ENCODE measurements at regions of chr1 and their contacts with region 1.

Region 1: GRCh38 chr1:12153181-12153785 is 13.5 kb upstream of the TNFRSF1B start:
- DNase-seq: no peak
- ATAC-seq: no peak
- H3K4me3 Mint-ChIP-seq: peak overlapping the region; percentile 18
- H3K27ac Mint-ChIP-seq: peak overlapping the region; percentile 99
- H3K4me1 Mint-ChIP-seq: peaks cover 84% of the 10 kb centered on the region
- H3K27me3 Mint-ChIP-seq: no peaks in the 10 kb centered on the region

Region 2: DNA sequence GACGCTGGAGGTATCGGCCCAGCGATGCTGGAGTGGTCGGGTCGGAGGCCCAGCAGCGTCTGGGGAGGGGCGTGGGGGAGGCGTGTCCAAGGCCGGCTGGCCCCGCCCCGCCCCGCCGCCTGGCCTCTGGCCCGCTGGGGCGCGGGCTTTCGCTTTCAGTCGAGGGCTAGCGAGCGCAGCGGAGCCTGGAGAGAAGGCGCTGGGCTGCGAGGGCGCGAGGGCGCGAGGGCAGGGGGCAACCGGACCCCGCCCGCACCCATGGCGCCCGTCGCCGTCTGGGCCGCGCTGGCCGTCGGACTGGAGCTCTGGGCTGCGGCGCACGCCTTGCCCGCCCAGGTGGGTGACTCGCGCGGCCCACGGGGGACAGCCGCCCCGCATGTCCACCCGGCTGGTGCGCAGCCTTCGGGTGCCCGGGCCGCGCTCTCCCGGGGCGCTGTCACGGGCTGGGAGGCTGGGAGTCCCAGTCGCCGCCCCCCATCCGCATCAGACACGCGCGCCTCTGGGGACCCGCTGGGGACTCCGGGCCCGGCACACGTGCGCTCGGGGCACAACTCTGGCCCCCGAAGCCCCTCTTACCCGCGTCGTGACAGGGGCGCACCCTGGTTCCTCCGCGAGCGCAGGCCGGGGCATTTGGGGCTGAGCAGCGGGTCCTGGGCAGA is 13.7 kb after region 1 on chr1 and contains the start of gene TNFRSF1B:
- POLR2A ChIA-PET with region 1: interaction called, 108 read pairs
- DNase-seq: peak; percentile 87
- ATAC-seq: peak; percentile 53
- H3K4me3 Mint-ChIP-seq: peak within 1 kb of the TSS; percentile 100
- H3K27ac Mint-ChIP-seq: peak within 1 kb of the TSS; percentile 99
- H3K4me1 Mint-ChIP-seq: peaks cover 62% of the 10 kb centered on the region
- H3K27me3 Mint-ChIP-seq: no peaks in the 10 kb centered on the region
- total RNA-seq, gene TNFRSF1B: 215 to 246 TPM

Region 3: GRCh38 chr1:12244078-12244477 is 90.8 kb after region 1 on chr1:
- POLR2A ChIA-PET with region 1: no interaction called
- DNase-seq: no peak
- ATAC-seq: no peak
- H3K4me3 Mint-ChIP-seq: no peak overlapping the region
- H3K27ac Mint-ChIP-seq: no peak overlapping the region
- H3K4me1 Mint-ChIP-seq: no peaks in the 10 kb centered on the region
- H3K27me3 Mint-ChIP-seq: no peaks in the 10 kb centered on the region

Region 4: DNA sequence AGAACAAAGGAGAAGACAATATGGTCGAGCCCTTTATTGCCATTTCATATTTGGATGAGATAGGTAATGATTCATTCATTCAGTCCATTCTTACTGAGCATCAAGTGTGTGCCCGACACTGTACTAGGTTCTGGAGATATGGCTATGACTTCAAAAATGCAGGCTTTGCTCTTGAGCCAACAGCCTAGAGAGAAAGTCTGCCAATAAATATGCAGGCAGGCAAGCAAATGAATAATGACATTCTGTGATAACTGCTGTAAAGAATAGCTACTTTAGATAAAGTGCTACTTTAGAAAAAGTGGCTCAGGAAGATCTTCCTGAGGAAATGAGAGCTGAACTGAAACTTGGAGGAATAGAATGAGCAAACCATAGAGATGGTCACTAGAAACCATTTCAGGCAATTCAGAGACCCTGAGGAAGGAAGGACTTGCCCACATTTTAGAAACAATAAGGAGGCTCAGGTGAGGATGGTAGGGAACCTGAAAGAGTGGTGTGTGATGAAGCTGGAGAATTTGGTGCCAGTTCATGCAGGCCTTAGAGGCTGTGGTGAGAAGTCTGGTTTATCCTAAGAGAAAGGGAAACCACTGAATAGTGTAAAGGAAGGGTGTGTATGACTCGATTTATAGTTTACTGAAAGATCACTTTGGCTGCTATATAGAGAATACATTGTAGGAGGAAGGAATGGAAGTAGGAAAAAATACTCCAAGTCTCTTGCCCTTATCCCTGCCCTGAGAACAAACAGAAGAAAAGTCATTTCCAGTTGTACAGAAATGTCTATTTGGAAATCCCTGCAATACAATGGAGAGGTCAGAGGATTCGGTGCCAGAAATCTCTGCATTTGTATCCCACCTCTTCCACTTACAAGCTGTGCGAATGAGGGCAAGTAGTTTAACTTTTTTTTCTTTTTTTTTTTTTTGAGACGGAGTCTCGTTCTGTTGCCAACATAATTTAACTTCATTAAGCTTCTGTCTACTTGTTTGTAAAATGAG is 244.5 kb after region 1 on chr1:
- POLR2A ChIA-PET with region 1: no interaction called
- DNase-seq: no peak
- ATAC-seq: peak; percentile 65
- H3K4me3 Mint-ChIP-seq: peak overlapping the region; percentile 47
- H3K27ac Mint-ChIP-seq: peak overlapping the region; percentile 71
- H3K4me1 Mint-ChIP-seq: peaks cover 24% of the 10 kb centered on the region
- H3K27me3 Mint-ChIP-seq: no peaks in the 10 kb centered on the region

Measured in activated naive CD8-positive, alpha-beta T cell treated with anti-CD3 and anti-CD28 coated beads, Interleukin-2, amount 10 ng/mL, durations not matched to agents 7 days and 5 days (primary cell).